ENCODE measurements at regions of chr20 and their contacts with region 1.

Region 1: DNA sequence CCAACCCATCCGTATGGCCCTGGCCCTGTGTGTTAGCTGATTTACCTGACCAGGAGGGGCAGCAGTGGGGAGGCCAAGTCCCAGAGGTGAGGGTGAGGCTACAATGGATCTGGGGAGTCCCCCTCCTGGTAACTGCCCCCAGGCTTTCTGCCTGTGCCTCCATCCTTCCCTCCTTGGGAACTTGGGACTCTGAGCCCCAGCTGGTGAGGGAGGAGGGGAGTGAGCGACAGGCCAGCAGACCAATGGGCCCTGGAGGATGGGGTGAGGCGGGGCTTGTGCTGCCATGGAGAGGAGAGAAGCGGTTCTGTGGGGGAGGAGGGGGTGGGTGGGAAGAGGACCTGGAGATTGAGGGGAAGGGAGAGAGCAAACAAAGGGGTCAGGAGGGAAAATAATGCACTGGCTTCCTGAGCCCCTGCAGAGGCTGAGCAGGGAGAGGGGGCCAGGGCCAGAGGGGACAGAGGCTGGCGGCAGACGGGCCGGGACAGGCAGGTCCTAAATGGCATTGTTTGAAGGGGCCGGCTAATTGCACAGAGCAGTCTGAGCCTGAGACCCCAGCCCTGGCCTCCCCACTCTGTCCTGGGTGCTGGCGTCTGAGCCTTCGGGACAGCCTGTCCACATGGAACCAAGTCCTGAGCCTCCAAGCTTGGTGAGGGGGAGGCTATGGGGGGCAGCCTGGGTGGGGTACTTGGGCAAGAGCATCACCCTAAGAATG is 17.5 kb downstream of the DNMT3B start:
- DNase-seq: no peak
- H3K4me3 Mint-ChIP-seq: no peak overlapping the region
- H3K27ac Mint-ChIP-seq: no peak overlapping the region
- H3K4me1 Mint-ChIP-seq: peaks cover 24% of the 10 kb centered on the region
- H3K27me3 Mint-ChIP-seq: no peaks in the 10 kb centered on the region

Region 2: DNA sequence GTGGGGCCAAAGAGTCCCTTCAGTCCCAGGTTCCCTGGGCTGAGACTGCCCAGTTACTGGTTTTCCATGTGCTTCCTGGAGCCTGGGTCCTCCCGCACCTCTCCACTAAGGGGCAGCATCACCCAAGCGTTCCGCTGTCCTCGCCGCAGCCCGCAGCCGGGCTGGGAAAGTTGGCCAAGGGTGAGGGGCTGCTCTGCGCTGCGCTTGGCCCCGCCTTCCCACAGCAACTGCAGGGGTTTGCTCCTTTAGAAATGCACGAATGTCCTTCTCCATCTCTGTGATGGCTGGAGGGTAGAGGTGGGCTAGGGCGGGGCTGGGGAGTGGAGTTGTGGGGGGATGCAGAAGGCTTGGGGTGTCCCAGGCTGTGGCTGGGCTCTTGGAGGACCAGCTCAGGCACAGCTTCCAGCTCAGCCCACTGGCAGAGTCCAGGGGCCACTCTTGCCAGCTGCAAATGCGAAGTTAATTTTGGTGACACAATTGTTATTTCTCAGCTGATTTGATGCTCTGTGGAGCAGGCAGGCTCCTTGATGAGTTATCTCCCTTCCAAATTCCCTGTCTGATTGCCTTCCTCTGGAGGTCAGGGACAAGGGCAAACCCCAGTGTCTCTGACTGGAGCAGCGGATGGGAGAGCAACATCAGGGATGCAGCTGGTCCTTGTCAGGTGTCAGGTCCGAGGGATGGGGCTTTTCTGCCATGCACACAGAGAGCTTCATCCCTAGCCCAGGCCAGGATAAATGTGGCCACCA is 257.7 kb before region 1 on chr20:
- CTCF ChIA-PET with region 1: interaction called, 3 read pairs
- intact Hi-C with region 1: loop called (anchors 5 kb)
- DNase-seq: peak; percentile 81
- H3K4me3 Mint-ChIP-seq: no peak overlapping the region
- H3K27ac Mint-ChIP-seq: peak overlapping the region; percentile 81
- H3K4me1 Mint-ChIP-seq: peaks cover 56% of the 10 kb centered on the region
- H3K27me3 Mint-ChIP-seq: no peaks in the 10 kb centered on the region

Region 3: DNA sequence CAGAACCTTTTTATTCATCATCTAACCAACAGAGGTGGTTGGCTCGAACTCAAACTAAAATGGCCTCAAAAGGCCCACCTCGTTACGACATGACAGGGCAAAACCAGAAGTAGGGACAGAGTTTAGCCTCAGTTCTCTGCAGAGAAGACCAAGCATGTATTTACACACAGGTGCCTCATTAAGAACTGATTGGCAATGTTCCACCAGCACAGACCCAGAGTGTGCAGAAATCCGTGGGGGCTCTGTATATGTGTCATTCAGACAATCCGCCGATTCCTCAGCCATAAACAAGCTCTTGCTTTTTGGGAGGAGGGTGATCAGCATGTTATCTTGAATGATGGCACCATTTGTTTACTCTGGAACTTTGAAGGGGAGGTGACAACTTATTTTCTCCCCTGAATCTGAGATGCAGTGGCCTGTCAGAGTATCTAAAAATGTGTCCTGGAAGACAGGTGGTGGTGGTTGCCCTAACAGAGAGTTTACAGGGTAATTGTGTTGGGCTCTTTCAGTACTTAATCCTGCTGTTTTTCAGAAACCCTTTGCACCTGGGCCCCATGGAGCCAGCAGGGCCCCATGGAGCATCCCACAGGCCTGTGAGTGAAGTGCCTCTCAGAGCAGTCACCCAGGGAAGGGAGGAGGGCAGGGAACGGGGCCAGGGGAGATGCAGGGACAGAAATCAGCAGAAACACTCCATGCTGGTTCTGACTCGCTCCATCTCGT is 76.8 kb before region 1 on chr20:
- CTCF ChIA-PET with region 1: interaction called, 11 read pairs
- intact Hi-C with region 1: no loop called
- DNase-seq: no peak
- H3K4me3 Mint-ChIP-seq: no peak overlapping the region
- H3K27ac Mint-ChIP-seq: no peak overlapping the region
- H3K4me1 Mint-ChIP-seq: peaks cover 2% of the 10 kb centered on the region
- H3K27me3 Mint-ChIP-seq: no peaks in the 10 kb centered on the region

Region 4: DNA sequence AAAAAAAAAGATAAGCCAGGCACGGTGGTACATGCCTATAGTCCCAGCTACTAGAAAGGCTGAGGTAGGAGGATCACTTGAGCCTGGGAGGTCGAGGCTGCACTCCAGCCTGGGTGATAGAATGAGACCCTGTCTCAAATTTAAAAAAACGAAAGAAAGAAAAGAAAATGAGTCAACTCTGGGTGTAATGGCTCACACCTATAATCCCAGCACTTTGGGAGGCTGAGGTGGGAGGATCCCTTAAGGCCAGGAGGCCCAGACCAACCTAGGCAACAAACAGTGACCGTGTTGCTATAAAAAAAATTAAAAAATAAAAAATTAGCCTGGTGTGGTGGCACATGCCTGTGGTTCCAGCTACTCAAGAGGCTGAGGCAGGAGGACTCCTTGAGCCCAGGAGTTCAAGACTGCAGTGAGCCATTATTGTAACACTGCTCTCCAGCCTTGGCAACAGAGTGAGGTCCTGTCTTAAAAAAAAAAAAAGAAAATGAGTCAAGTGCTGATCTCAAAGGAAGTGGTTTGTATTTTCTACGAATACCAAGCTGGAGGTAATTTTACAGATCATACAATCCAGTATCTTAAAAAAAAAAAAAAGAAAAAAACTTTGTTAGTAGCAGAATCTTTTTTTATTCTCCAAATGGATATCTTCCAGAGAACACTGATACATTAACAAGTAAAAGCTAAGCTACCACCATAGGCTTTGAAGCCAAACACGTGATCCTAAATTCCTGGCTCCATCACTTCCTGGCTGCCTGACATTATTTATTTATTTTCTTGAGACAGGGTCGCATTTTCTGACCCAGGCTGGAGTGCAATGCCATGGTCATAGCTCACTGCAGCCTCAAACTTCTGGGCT is 42.1 kb before region 1 on chr20:
- CTCF ChIA-PET with region 1: interaction called, 32 read pairs
- intact Hi-C with region 1: loop called (anchors 2 kb)
- DNase-seq: peak; percentile 62
- H3K4me3 Mint-ChIP-seq: peak overlapping the region; percentile 9
- H3K27ac Mint-ChIP-seq: peak overlapping the region; percentile 79
- H3K4me1 Mint-ChIP-seq: peaks cover 44% of the 10 kb centered on the region
- H3K27me3 Mint-ChIP-seq: no peaks in the 10 kb centered on the region

Region 5: DNA sequence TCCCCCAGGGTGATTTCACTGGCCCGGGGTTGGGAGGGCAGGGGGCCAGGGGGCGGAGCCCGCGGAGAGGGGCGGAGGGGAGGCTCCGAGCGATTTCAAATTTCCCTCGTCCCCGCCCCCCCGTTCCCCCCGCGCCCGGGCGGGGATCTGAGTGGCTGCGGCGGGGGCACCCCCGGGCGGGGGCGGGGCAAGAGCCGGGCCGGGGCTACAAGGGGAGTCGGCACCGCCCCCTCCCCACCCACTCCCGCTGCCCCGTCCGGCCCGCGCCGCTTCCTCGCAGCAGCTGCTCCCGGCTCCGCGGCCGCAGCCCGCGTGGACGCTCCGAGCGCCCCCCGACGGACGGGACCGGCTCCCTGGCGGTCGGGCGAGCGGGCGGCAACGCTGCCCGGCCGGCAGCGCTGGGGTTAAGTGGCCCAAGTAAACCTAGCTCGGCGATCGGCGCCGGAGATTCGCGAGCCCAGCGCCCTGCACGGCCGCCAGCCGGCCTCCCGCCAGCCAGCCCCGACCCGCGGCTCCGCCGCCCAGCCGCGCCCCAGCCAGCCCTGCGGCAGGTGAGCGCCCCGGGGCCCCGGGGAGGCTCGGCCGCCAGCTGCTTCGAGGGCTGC is 17.4 kb before region 1 on chr20 and contains the start of gene DNMT3B:
- CTCF ChIA-PET with region 1: interaction called, 28 read pairs
- intact Hi-C with region 1: no loop called
- DNase-seq: peak; percentile 79
- H3K4me3 Mint-ChIP-seq: peak within 1 kb of the TSS; percentile 79
- H3K27ac Mint-ChIP-seq: no peak within 1 kb of the TSS
- H3K4me1 Mint-ChIP-seq: peaks cover 12% of the 10 kb centered on the region
- H3K27me3 Mint-ChIP-seq: no peaks in the 10 kb centered on the region
- total RNA-seq, gene DNMT3B: 2.0 to 2.2 TPM

Region 6: DNA sequence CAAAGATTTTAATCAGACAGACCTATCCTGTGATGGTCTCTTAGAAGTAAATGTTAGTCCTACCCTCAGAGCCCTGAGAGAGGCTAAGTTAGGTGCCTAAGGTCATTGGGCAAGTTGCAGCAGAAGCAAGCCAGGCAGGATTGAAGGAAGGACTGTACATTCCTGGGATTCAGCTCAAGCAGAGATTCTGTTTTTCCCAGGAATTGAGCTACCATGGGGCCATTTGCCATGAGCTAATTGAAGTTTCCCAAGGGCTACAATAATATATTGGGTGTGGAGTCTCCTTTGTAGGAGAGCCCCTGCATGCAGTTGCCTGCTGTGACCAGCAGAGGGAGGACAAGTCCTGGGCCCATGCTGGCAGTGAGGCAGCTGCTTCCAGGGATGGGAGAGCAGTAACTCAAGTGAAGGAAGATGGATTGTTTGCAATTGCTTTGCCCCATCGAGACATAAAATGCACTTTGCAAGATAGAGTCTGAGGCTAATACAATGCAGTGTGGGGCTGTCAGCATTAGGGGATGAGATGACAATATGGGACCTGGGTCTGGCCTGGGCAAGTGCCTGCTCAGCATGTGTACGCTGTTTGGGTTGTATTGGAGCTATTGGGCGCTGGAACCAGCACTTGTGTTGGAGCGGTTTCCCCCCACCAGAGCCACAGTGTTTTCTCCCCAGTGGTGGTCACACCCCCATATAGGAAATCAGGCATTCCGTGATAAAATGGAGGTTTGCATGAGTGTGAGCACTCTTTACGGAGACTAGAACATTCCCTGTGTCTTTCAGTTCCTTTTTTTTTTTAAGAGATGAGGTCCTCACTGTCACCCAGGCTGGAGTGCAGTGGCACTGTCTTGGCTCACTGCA is 10.5 kb after region 1 on chr20:
- CTCF ChIA-PET with region 1: interaction called, 12 read pairs
- intact Hi-C with region 1: no loop called
- DNase-seq: peak; percentile 86
- H3K4me3 Mint-ChIP-seq: no peak overlapping the region
- H3K27ac Mint-ChIP-seq: no peak overlapping the region
- H3K4me1 Mint-ChIP-seq: peaks cover 28% of the 10 kb centered on the region
- H3K27me3 Mint-ChIP-seq: no peaks in the 10 kb centered on the region

Region 7: GRCh38 chr20:32830437-32830836 is 50.8 kb after region 1 on chr20:
- CTCF ChIA-PET with region 1: no interaction called
- intact Hi-C with region 1: no loop called
- DNase-seq: no peak
- H3K4me3 Mint-ChIP-seq: no peak overlapping the region
- H3K27ac Mint-ChIP-seq: peak overlapping the region; percentile 17
- H3K4me1 Mint-ChIP-seq: peaks cover 61% of the 10 kb centered on the region
- H3K27me3 Mint-ChIP-seq: no peaks in the 10 kb centered on the region

Region 8: GRCh38 chr20:33026072-33026778 is 246.6 kb after region 1 on chr20:
- CTCF ChIA-PET with region 1: no interaction called
- intact Hi-C with region 1: no loop called
- DNase-seq: no peak
- H3K4me3 Mint-ChIP-seq: no peak overlapping the region
- H3K27ac Mint-ChIP-seq: no peak overlapping the region
- H3K4me1 Mint-ChIP-seq: no peaks in the 10 kb centered on the region
- H3K27me3 Mint-ChIP-seq: no peaks in the 10 kb centered on the region

Measured in activated naive CD4-positive, alpha-beta T cell treated with anti-CD3 and anti-CD28 coated beads for 36 hours (primary cell).